AG04450 (cell line): ENCODE measurements at regions of chr1 and their contacts with region 1.

Region 1: GRCh38 chr1:86470859-86471258 is 2.1 kb downstream of the CLCA1 start:
- DNase-seq: no peak
- H3K4me3 ChIP-seq: no peak overlapping the region
- H3K27ac ChIP-seq: no peak overlapping the region
- H3K27me3 ChIP-seq: peaks cover 6% of the 10 kb centered on the region
- CTCF ChIP-seq: no peak

Region 2: GRCh38 chr1:86380257-86380861 is 90.5 kb before region 1 on chr1:
- CTCF ChIA-PET with region 1: interaction called, 14 read pairs
- POLR2A ChIA-PET with region 1: no interaction called
- DNase-seq: peak; percentile 60
- H3K4me3 ChIP-seq: no peak overlapping the region
- H3K27ac ChIP-seq: no peak overlapping the region
- H3K27me3 ChIP-seq: no peaks in the 10 kb centered on the region
- CTCF ChIP-seq: peak; percentile 74

Region 3: GRCh38 chr1:86450847-86451246 is 20.0 kb before region 1 on chr1:
- CTCF ChIA-PET with region 1: interaction called, 14 read pairs
- POLR2A ChIA-PET with region 1: no interaction called
- DNase-seq: no peak
- H3K4me3 ChIP-seq: no peak overlapping the region
- H3K27ac ChIP-seq: no peak overlapping the region
- H3K27me3 ChIP-seq: peaks cover under 1% of the 10 kb centered on the region
- CTCF ChIP-seq: no peak

Region 4: DNA sequence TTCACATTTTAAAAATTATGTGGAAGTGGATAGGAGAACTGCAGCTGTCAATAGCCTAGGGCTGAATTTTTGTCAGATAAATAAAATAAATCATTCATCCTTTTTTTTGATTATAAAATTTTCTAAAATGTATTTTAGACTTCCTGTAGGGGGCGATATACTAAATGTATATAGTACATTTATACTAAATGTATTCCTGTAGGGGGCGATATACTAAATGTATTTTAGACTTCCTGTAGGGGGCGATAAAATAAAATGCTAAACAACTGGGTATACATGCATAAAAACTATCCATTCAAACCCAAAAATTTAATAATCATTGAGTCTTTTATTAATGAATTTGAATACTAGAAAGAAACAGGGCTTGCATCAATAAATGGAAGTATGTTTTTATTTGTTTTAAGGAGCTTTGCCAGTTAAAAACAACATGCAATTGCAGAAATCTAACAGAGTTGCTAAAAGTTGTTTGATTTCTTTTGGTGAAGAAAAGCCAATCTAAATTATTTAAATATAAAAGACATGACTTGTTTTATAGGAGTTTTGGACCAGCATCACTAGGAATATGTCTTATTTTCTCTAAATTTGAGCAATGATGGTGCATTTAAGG is 29.2 kb after region 1 on chr1:
- CTCF ChIA-PET with region 1: interaction called, 36 read pairs
- POLR2A ChIA-PET with region 1: no interaction called
- DNase-seq: no peak
- H3K4me3 ChIP-seq: no peak overlapping the region
- H3K27ac ChIP-seq: no peak overlapping the region
- H3K27me3 ChIP-seq: peaks cover 7% of the 10 kb centered on the region
- CTCF ChIP-seq: peak; percentile 67

Region 5: GRCh38 chr1:86515597-86515996 is 44.7 kb after region 1 on chr1:
- CTCF ChIA-PET with region 1: interaction called, 29 read pairs
- POLR2A ChIA-PET with region 1: no interaction called
- DNase-seq: no peak
- H3K4me3 ChIP-seq: no peak overlapping the region
- H3K27ac ChIP-seq: no peak overlapping the region
- H3K27me3 ChIP-seq: no peaks in the 10 kb centered on the region
- CTCF ChIP-seq: peak; percentile 36